CD8-positive, alpha-beta T cell (primary cell): ENCODE measurements at regions of chr15 and their contacts with region 1.

Region 1: DNA sequence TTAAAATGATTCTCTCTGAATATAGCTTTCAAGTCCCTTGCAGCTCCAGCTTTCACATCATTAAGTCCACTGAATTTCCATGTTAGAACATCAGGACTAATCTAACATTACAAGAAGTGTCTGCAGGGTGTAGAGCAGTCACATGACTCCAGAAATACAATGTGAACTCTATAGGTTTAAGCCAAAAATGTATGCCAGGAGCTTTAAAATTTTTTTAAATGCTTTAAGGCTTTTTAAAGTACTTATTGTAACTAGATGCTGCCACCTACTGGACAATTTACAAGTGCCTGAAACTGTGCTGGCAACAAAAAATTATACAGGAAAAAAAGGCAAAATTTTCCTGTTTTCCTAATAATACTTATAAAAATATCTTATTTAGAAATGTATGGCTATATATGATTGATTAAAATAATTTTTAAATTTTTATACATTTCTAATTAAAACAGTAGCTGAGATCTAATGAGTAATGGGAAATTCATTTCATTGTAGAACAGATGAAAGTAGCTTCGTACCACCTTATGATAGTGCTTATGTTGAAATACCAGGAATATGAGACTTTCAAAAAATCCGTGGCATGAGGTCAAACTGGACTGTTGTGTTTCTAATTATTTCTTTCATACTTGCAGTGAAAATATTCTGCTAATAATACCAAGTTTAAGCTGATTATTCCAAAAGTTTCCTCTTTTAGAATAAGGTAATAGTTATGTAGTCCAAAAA is 25.7 kb downstream of the FSIP1 start:
- DNase-seq: peak in 3 of 9 experiments; percentile 33 to 76 (median 67)
- ATAC-seq: peak; percentile 38
- H3K4me3 ChIP-seq: no peak overlapping the region
- H3K4me3 Mint-ChIP-seq: no peak overlapping the region
- H3K27ac ChIP-seq: no peak overlapping the region
- H3K27ac Mint-ChIP-seq: no peak overlapping the region
- H3K4me1 ChIP-seq: no peaks in the 10 kb centered on the region
- H3K4me1 Mint-ChIP-seq: no peaks in the 10 kb centered on the region
- H3K27me3 ChIP-seq: no peaks in the 10 kb centered on the region
- H3K27me3 Mint-ChIP-seq: no peaks in the 10 kb centered on the region
- CTCF ChIP-seq: peak; percentile 98

Region 2: GRCh38 chr15:38474155-38474757 is 1282.7 kb before region 1 on chr15:
- CTCF ChIA-PET with region 1: no interaction called
- POLR2A ChIA-PET with region 1: no interaction called
- intact Hi-C with region 1: loop called (anchors 10 kb)
- DNase-seq: peak in 7 of 9 experiments; percentile 13 to 85 (median 32)
- ATAC-seq: peak; percentile 99
- H3K4me3 ChIP-seq: no peak overlapping the region
- H3K4me3 Mint-ChIP-seq: no peak overlapping the region
- H3K27ac ChIP-seq: peak overlapping the region in 1 of 2 experiments; percentile 17
- H3K27ac Mint-ChIP-seq: peak overlapping the region; percentile 37
- H3K4me1 ChIP-seq: no peaks in the 10 kb centered on the region
- H3K4me1 Mint-ChIP-seq: peaks cover 9% of the 10 kb centered on the region
- H3K27me3 ChIP-seq: no peaks in the 10 kb centered on the region
- H3K27me3 Mint-ChIP-seq: no peaks in the 10 kb centered on the region
- CTCF ChIP-seq: peak; percentile 74

Region 3: DNA sequence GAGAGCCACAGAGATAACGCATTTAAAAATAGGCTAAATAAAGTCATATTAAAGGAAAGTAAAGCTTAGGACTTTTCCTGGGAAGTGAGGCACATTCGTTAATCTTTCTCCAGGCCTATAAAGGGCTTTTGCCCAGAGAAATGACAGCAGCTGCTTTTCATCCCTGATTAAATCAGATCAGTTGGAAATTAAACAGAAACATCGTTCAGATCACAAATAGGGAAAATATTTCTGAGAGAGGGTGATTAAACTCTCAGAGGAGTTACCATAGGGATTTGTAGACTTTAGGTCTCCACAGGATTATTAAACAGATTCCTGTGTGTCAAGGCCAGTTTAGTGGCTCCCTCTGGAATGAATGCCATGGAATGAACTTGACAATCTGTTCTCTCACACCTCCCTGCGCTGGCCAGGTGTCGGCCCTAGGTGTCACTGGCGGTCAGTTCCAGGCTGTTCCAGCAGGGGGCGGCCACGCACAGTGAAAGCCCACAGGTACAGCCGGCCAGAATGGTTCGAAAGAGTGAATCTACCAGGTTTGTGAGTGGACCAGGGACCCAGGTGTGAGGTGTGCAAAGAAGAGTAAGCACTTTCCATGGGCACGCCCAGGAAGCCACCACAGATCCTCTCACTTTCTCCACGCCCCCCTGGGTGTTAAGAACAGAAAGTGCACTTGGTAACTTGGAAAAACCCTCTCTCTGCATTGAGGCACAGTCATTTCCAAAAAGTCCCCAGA is 939.4 kb before region 1 on chr15:
- CTCF ChIA-PET with region 1: interaction called, 20 read pairs
- POLR2A ChIA-PET with region 1: no interaction called
- intact Hi-C with region 1: loop called (anchors 1 kb)
- DNase-seq: peak; percentile 69 to 90 (median 78)
- ATAC-seq: peak; percentile 96
- H3K4me3 ChIP-seq: no peak overlapping the region
- H3K4me3 Mint-ChIP-seq: no peak overlapping the region
- H3K27ac ChIP-seq: no peak overlapping the region
- H3K27ac Mint-ChIP-seq: no peak overlapping the region
- H3K4me1 ChIP-seq: peaks cover 3% of the 10 kb centered on the region
- H3K4me1 Mint-ChIP-seq: peaks cover 5% of the 10 kb centered on the region
- H3K27me3 ChIP-seq: no peaks in the 10 kb centered on the region
- H3K27me3 Mint-ChIP-seq: peaks cover 4% of the 10 kb centered on the region
- CTCF ChIP-seq: peak; percentile 98

Region 4: GRCh38 chr15:39396979-39397615 is 359.9 kb before region 1 on chr15:
- CTCF ChIA-PET with region 1: no interaction called
- POLR2A ChIA-PET with region 1: no interaction called
- intact Hi-C with region 1: no loop called
- DNase-seq: peak in 1 of 9 experiments; percentile 46
- ATAC-seq: no peak
- H3K4me3 ChIP-seq: no peak overlapping the region
- H3K4me3 Mint-ChIP-seq: no peak overlapping the region
- H3K27ac ChIP-seq: no peak overlapping the region
- H3K27ac Mint-ChIP-seq: no peak overlapping the region
- H3K4me1 ChIP-seq: no peaks in the 10 kb centered on the region
- H3K4me1 Mint-ChIP-seq: no peaks in the 10 kb centered on the region
- H3K27me3 ChIP-seq: no peaks in the 10 kb centered on the region
- H3K27me3 Mint-ChIP-seq: peaks cover 3% of the 10 kb centered on the region
- CTCF ChIP-seq: no peak

Region 5: GRCh38 chr15:39580117-39580484 is 176.9 kb before region 1 on chr15:
- CTCF ChIA-PET with region 1: interaction called, 49 read pairs
- POLR2A ChIA-PET with region 1: interaction called, 3 read pairs
- intact Hi-C with region 1: loop called (anchors 1 to 2 kb)
- DNase-seq: peak; percentile 78 to 93 (median 85)
- ATAC-seq: peak; percentile 89
- H3K4me3 ChIP-seq: peak overlapping the region in 1 of 2 experiments; percentile 57
- H3K4me3 Mint-ChIP-seq: peak overlapping the region; percentile 68
- H3K27ac ChIP-seq: no peak overlapping the region
- H3K27ac Mint-ChIP-seq: no peak overlapping the region
- H3K4me1 ChIP-seq: peaks cover 10% of the 10 kb centered on the region
- H3K4me1 Mint-ChIP-seq: peaks cover 16% of the 10 kb centered on the region
- H3K27me3 ChIP-seq: peaks cover 5 to 8% of the 10 kb centered on the region in 2 experiments
- H3K27me3 Mint-ChIP-seq: peaks cover 47% of the 10 kb centered on the region
- CTCF ChIP-seq: peak; percentile 89

Region 6: DNA sequence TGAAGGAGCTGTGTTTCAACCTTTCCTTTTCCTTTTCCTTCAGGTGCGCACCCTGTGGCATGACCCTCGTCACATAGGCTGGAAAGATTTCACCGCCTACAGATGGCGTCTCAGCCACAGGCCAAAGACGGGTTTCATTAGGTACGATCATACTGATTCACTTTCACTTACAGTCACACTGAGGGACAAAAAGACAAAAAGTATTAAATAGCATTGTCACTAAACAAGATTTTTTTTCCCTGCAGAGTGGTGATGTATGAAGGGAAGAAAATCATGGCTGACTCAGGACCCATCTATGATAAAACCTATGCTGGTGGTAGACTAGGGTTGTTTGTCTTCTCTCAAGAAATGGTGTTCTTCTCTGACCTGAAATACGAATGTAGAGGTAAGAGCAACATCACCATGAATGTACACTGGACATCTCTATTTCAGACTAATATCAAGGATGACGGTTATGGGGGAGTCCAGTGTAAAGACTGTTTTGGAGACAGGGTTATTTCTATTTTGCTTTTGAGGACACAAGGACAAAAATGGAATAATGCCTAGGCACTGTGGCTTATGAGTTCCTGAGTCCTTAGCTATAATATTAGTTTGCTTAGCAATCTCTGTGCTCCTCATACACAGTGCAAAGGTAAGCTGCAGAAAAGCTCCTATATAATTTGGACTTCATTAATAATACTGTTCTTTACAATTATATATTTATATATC is 162.8 kb before region 1 on chr15:
- CTCF ChIA-PET with region 1: interaction called, 43 read pairs
- POLR2A ChIA-PET with region 1: no interaction called
- intact Hi-C with region 1: loop called (anchors 1 to 2 kb)
- DNase-seq: peak in 4 of 9 experiments; percentile 19 to 72 (median 52)
- ATAC-seq: peak; percentile 58
- H3K4me3 ChIP-seq: no peak overlapping the region
- H3K4me3 Mint-ChIP-seq: peak overlapping the region; percentile 20
- H3K27ac ChIP-seq: no peak overlapping the region
- H3K27ac Mint-ChIP-seq: peak overlapping the region; percentile 74
- H3K4me1 ChIP-seq: no peaks in the 10 kb centered on the region
- H3K4me1 Mint-ChIP-seq: peaks cover 4% of the 10 kb centered on the region
- H3K27me3 ChIP-seq: no peaks in the 10 kb centered on the region
- H3K27me3 Mint-ChIP-seq: no peaks in the 10 kb centered on the region
- CTCF ChIP-seq: no peak

Region 7: GRCh38 chr15:39713846-39714245 is 43.1 kb before region 1 on chr15:
- CTCF ChIA-PET with region 1: interaction called, 10 read pairs
- POLR2A ChIA-PET with region 1: interaction called, 4 read pairs
- intact Hi-C with region 1: no loop called
- DNase-seq: no peak
- ATAC-seq: no peak
- H3K4me3 ChIP-seq: no peak overlapping the region
- H3K4me3 Mint-ChIP-seq: no peak overlapping the region
- H3K27ac ChIP-seq: no peak overlapping the region
- H3K27ac Mint-ChIP-seq: no peak overlapping the region
- H3K4me1 ChIP-seq: no peaks in the 10 kb centered on the region
- H3K4me1 Mint-ChIP-seq: no peaks in the 10 kb centered on the region
- H3K27me3 ChIP-seq: no peaks in the 10 kb centered on the region
- H3K27me3 Mint-ChIP-seq: no peaks in the 10 kb centered on the region
- CTCF ChIP-seq: no peak

Region 8: GRCh38 chr15:39767921-39768320 is 11.0 kb after region 1 on chr15:
- CTCF ChIA-PET with region 1: interaction called, 30 read pairs
- POLR2A ChIA-PET with region 1: no interaction called
- intact Hi-C with region 1: no loop called
- DNase-seq: no peak
- ATAC-seq: no peak
- H3K4me3 ChIP-seq: no peak overlapping the region
- H3K4me3 Mint-ChIP-seq: no peak overlapping the region
- H3K27ac ChIP-seq: no peak overlapping the region
- H3K27ac Mint-ChIP-seq: no peak overlapping the region
- H3K4me1 ChIP-seq: no peaks in the 10 kb centered on the region
- H3K4me1 Mint-ChIP-seq: no peaks in the 10 kb centered on the region
- H3K27me3 ChIP-seq: no peaks in the 10 kb centered on the region
- H3K27me3 Mint-ChIP-seq: no peaks in the 10 kb centered on the region
- CTCF ChIP-seq: no peak